ENCODE measurements at regions of chr12 and their contacts with region 1.

Region 1: GRCh38 chr12:120228291-120229070 is 27.6 kb upstream of the RPLP0 start:
- DNase-seq: peak; percentile 61
- H3K4me3 ChIP-seq: no peak overlapping the region; the same call in 1 of the 2 replicates
- H3K27ac ChIP-seq: peak overlapping the region; percentile 99
- H3K27me3 ChIP-seq: no peaks in the 10 kb centered on the region
- CTCF ChIP-seq: peak; percentile 95

Region 2: DNA sequence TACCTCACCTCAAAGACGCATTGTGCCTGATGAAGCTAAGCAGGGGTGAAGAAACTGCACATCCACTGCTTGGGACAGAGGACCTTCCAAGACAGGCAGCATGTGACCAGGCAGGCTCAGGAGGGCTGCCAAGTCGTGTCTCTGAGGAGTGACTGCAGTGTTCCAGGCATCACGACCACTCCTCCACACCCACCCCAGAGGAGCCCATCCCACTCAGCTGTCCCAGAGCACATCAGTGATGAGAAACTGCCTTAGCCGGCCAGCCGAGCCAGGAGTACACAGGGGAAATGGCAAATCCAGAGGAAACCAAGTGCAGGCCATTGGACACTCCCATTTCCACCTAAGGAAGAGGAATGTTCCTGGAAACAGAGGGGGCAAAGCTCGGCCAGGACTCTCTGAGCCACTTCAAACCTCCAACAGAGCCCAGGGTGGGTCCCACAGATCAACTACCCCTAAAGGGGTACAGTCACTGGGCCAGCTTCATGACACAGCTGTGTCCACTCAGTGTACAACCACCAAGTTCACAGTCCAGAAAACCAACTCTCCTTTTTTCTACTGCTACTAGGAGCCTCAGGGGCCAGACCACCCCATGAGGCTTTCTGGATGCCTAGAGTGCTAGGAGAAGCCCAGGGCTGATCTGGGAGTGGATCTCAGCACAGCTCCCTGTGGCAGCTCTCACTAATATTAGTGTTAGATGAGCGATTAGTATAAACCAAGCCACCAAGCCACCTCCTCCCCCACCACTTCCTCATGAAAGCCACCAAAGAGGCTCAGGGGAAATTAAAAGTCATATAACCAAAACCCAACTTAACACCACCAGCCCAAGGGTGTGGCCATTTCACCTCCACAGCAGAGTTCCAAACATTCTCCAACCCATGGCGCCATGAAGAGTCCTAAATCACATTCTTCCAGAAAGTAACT is 21.7 kb after region 1 on chr12:
- CTCF ChIA-PET with region 1: interaction called, 685 read pairs
- POLR2A ChIA-PET with region 1: interaction called, 20 read pairs
- DNase-seq: no peak
- H3K4me3 ChIP-seq: no peak overlapping the region
- H3K27ac ChIP-seq: peak overlapping the region; percentile 47
- H3K27me3 ChIP-seq: no peaks in the 10 kb centered on the region
- CTCF ChIP-seq: no peak

Region 3: GRCh38 chr12:120265473-120266179 is 37.1 kb after region 1 on chr12 and contains the start of gene PXN:
- CTCF ChIA-PET with region 1: interaction called, 685 read pairs
- POLR2A ChIA-PET with region 1: interaction called, 118 read pairs
- DNase-seq: no peak
- H3K4me3 ChIP-seq: peak within 1 kb of the TSS; percentile 77
- H3K27ac ChIP-seq: peak within 1 kb of the TSS; percentile 21
- H3K27me3 ChIP-seq: no peaks in the 10 kb centered on the region
- CTCF ChIP-seq: peak; percentile 66
- polyA plus RNA-seq, gene PXN: 35.0 and 48.1 TPM in 2 replicates

Region 4: GRCh38 chr12:120292661-120293531 is 64.4 kb after region 1 on chr12 and contains the start of gene RNU4-1:
- CTCF ChIA-PET with region 1: interaction called, 68 read pairs
- POLR2A ChIA-PET with region 1: interaction called, 245 read pairs
- DNase-seq: peak; percentile 95
- H3K4me3 ChIP-seq: peak within 1 kb of the TSS; percentile 62
- H3K27ac ChIP-seq: peak within 1 kb of the TSS; percentile 100
- H3K27me3 ChIP-seq: no peaks in the 10 kb centered on the region
- CTCF ChIP-seq: no peak
- polyA plus RNA-seq, gene RNU4-1: under 0.01 TPM in 1 of 2 replicates, not detected in the other

Region 5: GRCh38 chr12:120332041-120332440 is 103.6 kb after region 1 on chr12:
- CTCF ChIA-PET with region 1: no interaction called
- POLR2A ChIA-PET with region 1: no interaction called
- DNase-seq: no peak
- H3K4me3 ChIP-seq: no peak overlapping the region
- H3K27ac ChIP-seq: no peak overlapping the region
- H3K27me3 ChIP-seq: peaks cover 24% of the 10 kb centered on the region
- CTCF ChIP-seq: no peak